PC-9 (cell line): ENCODE measurements at regions of chr17 and their contacts with region 1.

Region 1: GRCh38 chr17:7915611-7916382 is at the start of gene RNF227:
- DNase-seq: peak; percentile 67 to 91
- H3K4me3 ChIP-seq: peak within 1 kb of the TSS; percentile 60
- H3K27ac ChIP-seq: no peak within 1 kb of the TSS
- H3K4me1 ChIP-seq: no peaks in the 10 kb centered on the region
- H3K27me3 ChIP-seq: no peaks in the 10 kb centered on the region
- CTCF ChIP-seq: no peak
- total RNA-seq, gene RNF227: 3.1 and 4.2 TPM in 2 replicates

Region 2: DNA sequence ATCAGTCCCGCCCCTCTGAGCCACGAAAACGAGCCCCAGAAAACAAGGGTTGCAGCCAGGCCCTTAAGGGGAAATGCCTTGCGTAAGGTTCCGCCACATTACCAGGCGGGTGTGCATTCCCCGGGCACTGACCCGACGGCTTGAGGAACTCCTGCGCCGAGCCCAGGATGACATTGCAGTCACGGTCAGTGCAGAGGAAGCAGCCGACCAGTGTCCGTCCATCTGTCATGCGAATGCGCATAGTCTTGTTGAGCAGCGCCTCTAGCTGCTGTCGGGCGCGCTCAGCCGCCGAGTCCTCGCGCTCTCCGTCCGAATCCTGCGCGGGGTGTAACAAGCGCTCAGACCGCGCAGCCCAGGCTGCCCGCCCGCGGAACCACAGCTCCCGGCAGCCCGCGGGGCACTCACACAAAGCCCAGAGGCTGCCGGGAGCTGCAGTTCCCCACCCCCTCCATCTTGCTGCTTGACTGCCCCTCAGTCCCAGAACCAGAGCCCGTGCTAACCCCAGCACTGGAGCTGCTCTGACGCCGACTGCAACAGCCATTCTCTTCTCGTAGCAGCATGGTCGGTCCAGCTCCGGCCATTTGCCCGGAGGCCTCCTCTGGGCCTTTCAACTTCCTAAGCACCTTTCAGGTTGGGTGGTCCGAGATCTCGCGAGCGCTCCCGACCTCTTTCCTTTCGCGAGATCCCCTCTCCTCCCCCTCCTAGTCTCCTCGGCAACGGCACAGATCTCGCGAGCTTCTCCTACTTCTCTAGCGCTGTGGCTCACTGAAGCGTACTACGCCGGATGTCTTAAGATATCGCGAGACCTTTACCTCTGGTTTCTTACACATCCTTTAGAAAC is 58.7 kb before region 1 on chr17 and contains the start of gene NAA38:
- CTCF ChIA-PET with region 1: interaction called, 10 read pairs
- POLR2A ChIA-PET with region 1: interaction called, 10 read pairs
- intact Hi-C with region 1: loop called (anchors 5 kb)
- DNase-seq: peak; percentile 96 to 97
- H3K4me3 ChIP-seq: peak within 1 kb of the TSS; percentile 97
- H3K27ac ChIP-seq: peak within 1 kb of the TSS; percentile 79
- H3K4me1 ChIP-seq: peaks cover 13% of the 10 kb centered on the region
- H3K27me3 ChIP-seq: no peaks in the 10 kb centered on the region
- CTCF ChIP-seq: no peak
- total RNA-seq, gene NAA38: 159 and 176 TPM in 2 replicates

Region 3: DNA sequence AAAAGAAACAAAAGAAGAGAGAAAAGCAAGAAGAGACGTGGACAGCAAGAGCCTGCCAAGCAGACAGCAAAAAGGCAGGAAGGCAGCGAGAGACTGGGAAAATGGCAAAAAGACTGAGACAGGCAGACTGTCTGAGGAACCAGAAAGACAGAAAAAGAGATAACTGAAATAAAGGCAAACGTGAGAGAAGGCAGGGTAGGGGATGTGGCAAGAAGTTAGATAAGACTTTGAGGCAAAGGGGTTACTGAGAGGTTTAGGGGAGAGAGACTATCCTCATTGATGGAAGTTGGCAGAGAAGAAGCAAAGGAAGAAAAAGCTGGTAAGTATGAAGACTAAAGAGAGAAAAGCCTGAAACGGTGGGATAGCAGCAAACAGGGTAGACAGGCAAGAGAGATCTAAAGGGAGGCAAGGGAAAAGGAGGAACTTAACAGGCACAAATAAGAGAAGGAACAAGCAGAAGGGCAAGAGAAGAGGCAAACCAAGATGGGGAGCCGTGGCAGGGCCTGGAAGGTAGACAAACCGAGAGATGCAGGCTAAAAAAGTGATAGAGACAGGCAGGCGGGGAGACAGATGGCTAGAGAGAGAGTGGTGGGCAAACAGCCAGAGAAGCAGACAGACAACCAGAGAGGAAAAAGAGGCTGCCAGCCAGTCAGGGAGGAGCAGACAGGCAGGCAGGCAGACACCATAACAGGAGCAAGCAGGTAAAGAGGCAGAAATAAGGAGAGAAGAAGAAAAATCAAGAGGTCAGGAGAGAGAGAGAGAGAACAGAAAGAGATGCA is 34.3 kb before region 1 on chr17:
- CTCF ChIA-PET with region 1: interaction called, 3 read pairs
- POLR2A ChIA-PET with region 1: interaction called, 12 read pairs
- intact Hi-C with region 1: no loop called
- DNase-seq: no peak
- H3K4me3 ChIP-seq: no peak overlapping the region
- H3K27ac ChIP-seq: no peak overlapping the region
- H3K4me1 ChIP-seq: peaks cover 10% of the 10 kb centered on the region; the same call in 1 of the 2 replicates
- H3K27me3 ChIP-seq: no peaks in the 10 kb centered on the region
- CTCF ChIP-seq: no peak

Region 4: GRCh38 chr17:7931709-7932482 is 16.1 kb after region 1 on chr17 and contains the starts of genes CNTROB and TRAPPC1:
- CTCF ChIA-PET with region 1: interaction called, 6 read pairs
- POLR2A ChIA-PET with region 1: interaction called, 24 read pairs
- intact Hi-C with region 1: loop called (anchors 1 kb)
- DNase-seq: peak; percentile 87 to 100
- H3K4me3 ChIP-seq: peak within 1 kb of the TSS; percentile 88
- H3K27ac ChIP-seq: no peak within 1 kb of the TSS
- H3K4me1 ChIP-seq: peaks cover 11% of the 10 kb centered on the region
- H3K27me3 ChIP-seq: no peaks in the 10 kb centered on the region
- CTCF ChIP-seq: no peak
- total RNA-seq, gene CNTROB: 62.3 and 65.1 TPM in 2 replicates
- total RNA-seq, gene TRAPPC1: 181 and 224 TPM in 2 replicates

Region 5: GRCh38 chr17:8016632-8017478 is 101.1 kb after region 1 on chr17:
- CTCF ChIA-PET with region 1: interaction called, 10 read pairs
- POLR2A ChIA-PET with region 1: no interaction called
- intact Hi-C with region 1: no loop called
- DNase-seq: peak; percentile 35 to 68
- H3K4me3 ChIP-seq: peak overlapping the region; percentile 50
- H3K27ac ChIP-seq: no peak overlapping the region
- H3K4me1 ChIP-seq: no peaks in the 10 kb centered on the region
- H3K27me3 ChIP-seq: no peaks in the 10 kb centered on the region
- CTCF ChIP-seq: peak; percentile 70

Region 6: DNA sequence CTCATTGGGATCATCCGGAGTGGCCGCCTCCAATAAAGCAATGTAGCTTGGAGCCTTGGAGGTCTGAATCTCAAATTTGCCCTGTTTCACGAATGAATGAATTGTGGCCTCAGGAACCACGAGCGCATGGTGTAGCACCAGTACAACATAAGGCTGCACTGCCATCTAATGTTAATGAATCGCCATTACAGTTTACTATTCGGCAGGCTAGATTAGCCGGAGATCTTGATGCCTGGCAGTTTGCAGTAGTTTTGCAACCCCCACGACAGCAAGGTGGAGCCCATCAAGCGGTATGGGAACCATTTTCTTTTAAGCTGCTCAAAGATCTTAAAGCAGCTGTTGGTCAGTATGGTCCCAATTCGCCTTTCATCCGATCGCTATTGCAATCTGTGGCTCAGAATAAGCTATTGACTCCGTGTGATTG is 141.9 kb after region 1 on chr17:
- CTCF ChIA-PET with region 1: interaction called, 3 read pairs
- POLR2A ChIA-PET with region 1: interaction called, 5 read pairs
- intact Hi-C with region 1: loop called (anchors 1 kb)
- DNase-seq: peak; percentile 61 to 63
- H3K4me3 ChIP-seq: no peak overlapping the region; the same call in 1 of the 2 replicates
- H3K27ac ChIP-seq: no peak overlapping the region
- H3K4me1 ChIP-seq: peaks cover 28% of the 10 kb centered on the region
- H3K27me3 ChIP-seq: peaks cover 5% of the 10 kb centered on the region
- CTCF ChIP-seq: peak; percentile 74

Region 7: GRCh38 chr17:8091033-8091687 is 175.4 kb after region 1 on chr17:
- CTCF ChIA-PET with region 1: no interaction called
- POLR2A ChIA-PET with region 1: no interaction called
- intact Hi-C with region 1: no loop called
- DNase-seq: no peak
- H3K4me3 ChIP-seq: no peak overlapping the region
- H3K27ac ChIP-seq: no peak overlapping the region
- H3K4me1 ChIP-seq: no peaks in the 10 kb centered on the region
- H3K27me3 ChIP-seq: no peaks in the 10 kb centered on the region; the same call in 1 of the 2 replicates
- CTCF ChIP-seq: no peak